Breast epithelium (tissue), 4 donors: ENCODE measurements at regions of chr18 and their contacts with region 1.

Region 1: DNA sequence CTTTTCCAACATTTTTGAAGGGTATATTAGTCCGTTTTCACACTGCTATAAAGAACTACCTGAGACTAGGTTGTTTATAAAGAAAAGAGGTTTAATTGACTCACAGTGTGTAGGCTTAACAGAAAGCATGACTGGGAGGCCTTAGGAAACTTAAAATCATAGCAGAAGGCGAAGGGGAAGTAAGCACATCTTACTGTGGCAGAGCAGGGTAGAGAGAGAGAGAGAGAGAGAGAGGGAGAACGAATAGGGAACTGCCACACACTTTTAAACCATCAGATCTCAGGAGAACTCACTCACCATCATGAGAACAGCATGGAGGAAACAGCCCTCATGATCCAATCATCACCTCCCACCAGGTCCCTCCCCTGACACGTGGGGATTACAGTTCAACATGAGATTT is 420.3 kb downstream of the SOCS6 start:
- DNase-seq: no peak
- H3K4me3 ChIP-seq: no peak overlapping the region
- H3K27ac ChIP-seq: no peak overlapping the region
- H3K4me1 ChIP-seq: no peaks in the 10 kb centered on the region
- H3K27me3 ChIP-seq: no peaks in the 10 kb centered on the region
- CTCF ChIP-seq: no peak
- POLR2A ChIP-seq: no peak

Region 2: GRCh38 chr18:70720607-70721006 is 11.5 kb after region 1 on chr18:
- intact Hi-C with region 1: loop called (anchors 1 kb)
- DNase-seq: no peak
- H3K4me3 ChIP-seq: no peak overlapping the region
- H3K27ac ChIP-seq: no peak overlapping the region
- H3K4me1 ChIP-seq: no peaks in the 10 kb centered on the region
- H3K27me3 ChIP-seq: no peaks in the 10 kb centered on the region
- CTCF ChIP-seq: no peak
- POLR2A ChIP-seq: no peak

Region 3: DNA sequence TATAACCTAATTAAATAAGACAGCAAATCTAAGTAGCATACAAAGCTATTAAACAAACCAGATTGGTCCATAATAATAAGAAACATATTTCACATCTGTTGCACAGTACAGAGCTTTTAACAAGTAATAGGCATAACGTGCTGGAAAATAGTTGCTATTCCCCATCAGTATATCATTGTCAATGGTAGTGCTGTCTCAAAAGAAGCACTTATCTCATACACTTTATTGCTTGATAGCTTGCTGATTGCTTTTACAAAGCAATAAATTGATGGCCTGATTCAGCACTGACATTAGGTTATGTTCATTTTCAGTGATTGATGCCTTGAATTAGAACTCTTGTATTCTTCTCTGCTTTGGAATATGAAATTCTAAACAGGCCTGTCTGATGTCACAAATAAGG is 1193.3 kb after region 1 on chr18:
- intact Hi-C with region 1: no loop called
- DNase-seq: no peak
- H3K4me3 ChIP-seq: no peak overlapping the region
- H3K27ac ChIP-seq: no peak overlapping the region
- H3K4me1 ChIP-seq: no peaks in the 10 kb centered on the region
- H3K27me3 ChIP-seq: no peaks in the 10 kb centered on the region
- CTCF ChIP-seq: no peak
- POLR2A ChIP-seq: no peak